ENCODE measurements at regions of chr6 and their contacts with region 1.

Region 1: DNA sequence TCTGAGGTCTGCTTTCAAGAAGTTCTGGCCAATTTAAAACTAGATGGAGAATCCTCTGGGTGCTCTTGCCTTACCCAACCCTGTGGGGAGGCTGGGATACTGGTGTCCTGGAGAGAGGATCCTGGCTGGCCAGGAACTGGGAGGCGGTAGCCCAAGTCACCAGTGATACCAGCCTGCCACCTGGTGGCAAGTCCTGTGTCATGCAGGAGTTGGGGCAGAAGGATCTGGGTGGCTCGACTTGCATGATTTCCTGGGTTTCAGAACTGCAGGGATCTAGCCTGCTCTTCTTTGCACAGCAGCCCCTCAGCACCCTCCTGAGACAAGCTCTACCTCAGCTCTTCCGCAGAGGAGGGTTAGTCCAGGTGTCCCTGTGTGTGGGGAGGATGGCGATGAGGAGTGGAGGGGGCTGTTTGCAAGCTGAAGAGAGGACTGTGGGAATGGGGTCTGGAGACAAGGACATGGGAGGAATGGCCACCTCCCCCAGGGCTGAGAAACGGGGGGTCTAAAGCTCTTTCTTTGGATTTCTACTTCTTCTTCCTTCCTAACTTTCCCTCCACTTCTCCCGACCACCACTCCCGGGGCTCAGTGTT is 4.2 kb downstream of the KCNK17 start:
- DNase-seq: peak; percentile 17
- H3K4me3 ChIP-seq: no peak overlapping the region
- CTCF ChIP-seq: peak; percentile 93

Region 2: DNA sequence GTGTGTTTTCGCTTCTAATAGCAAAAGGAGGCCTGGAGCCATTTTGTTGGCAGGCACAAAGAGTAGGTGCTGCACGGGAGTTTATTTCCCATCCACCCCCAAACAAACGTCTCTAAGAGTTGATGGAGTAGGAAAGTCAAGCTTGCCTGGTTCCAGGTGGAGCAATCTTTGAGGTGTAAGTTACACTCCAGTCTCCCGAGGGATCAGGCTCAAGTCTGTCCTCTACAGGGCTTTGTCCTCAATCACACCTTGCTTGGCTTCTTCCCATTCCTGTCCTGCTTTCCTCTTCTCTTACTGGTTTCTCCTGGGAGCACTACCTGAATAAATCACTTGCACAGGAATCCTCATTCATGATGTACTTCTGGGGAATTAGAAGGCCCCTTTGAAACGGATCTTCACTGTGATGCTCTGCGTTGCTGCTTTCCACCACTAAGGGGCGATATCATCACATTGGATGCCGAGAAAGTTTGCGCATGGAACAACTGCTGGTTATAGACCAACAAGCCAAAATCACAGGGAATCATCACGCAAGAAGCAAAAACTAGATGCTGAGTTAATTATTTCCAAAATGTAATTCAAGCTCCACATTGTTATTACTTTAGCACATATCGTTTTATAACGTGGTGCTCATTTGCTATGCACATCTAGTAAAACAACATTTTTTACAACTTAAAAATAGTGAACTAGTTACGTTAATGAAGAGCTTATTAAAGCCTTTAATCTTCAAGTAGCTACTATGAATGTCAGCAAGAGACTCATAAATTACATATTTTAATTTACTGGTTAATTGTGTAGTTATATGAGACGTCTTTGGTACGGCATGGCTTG is 438.1 kb before region 1 on chr6:
- CTCF ChIA-PET with region 1: interaction called, 53 read pairs
- POLR2A ChIA-PET with region 1: no interaction called
- DNase-seq: no peak
- H3K4me3 ChIP-seq: no peak overlapping the region
- CTCF ChIP-seq: peak; percentile 87

Region 3: DNA sequence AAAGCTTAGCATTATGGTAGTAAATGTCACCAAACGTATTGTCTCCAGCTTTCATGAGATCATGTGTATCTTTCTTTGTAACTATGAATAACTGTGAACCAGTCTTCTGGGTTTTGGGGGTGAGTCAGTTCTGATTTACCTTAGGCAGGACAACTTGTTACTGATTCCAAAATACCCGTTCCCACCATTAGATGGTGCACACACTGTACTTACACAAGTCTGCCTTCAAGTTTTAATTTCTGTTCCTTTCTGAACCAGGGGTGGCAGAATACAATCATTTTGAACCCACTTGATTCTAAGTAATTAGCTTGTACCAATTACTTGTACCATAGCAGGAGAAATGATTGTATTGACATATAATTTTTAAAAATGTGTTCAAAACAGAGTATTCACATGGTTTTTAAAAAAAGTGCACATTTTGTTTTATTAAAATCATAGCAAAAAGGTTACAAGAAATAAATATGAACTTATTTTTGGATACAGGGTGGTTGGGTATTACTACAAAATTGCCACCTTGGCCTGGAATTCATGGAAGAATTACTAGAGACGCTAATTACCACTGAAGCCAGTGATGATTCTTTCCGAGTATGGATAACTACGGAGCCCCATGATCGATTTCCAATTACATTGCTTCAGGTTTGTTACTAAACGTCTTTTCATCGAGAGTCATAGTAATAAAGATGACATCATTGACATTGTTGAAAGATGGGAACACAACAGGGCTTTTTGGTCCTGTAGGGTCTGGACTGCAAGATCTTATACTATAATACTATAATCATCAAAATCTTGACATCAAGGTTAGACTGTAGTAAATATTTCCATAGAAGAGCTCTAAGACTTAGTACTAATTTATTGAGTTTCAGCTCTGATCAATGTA is 336.6 kb before region 1 on chr6:
- CTCF ChIA-PET with region 1: interaction called, 43 read pairs
- POLR2A ChIA-PET with region 1: no interaction called
- DNase-seq: peak; percentile 19
- H3K4me3 ChIP-seq: no peak overlapping the region
- CTCF ChIP-seq: peak; percentile 39

Region 4: GRCh38 chr6:39166189-39166911 is 143.7 kb before region 1 on chr6:
- CTCF ChIA-PET with region 1: interaction called, 107 read pairs
- POLR2A ChIA-PET with region 1: interaction called, 4 read pairs
- DNase-seq: no peak
- H3K4me3 ChIP-seq: no peak overlapping the region
- CTCF ChIP-seq: peak; percentile 86